Activated CD4-positive, alpha-beta T cell treated with anti-CD3 and anti-CD28 coated beads for 36 hours (primary cell): ENCODE measurements at regions of chr4 and their contacts with region 1.

Region 1: GRCh38 chr4:146342600-146343192 is 128.4 kb downstream of the REELD1 start:
- DNase-seq: peak; percentile 50
- ATAC-seq: no peak
- H3K4me3 Mint-ChIP-seq: no peak overlapping the region
- H3K27ac Mint-ChIP-seq: no peak overlapping the region
- H3K4me1 Mint-ChIP-seq: peaks cover 9% of the 10 kb centered on the region
- H3K27me3 Mint-ChIP-seq: no peaks in the 10 kb centered on the region

Region 2: DNA sequence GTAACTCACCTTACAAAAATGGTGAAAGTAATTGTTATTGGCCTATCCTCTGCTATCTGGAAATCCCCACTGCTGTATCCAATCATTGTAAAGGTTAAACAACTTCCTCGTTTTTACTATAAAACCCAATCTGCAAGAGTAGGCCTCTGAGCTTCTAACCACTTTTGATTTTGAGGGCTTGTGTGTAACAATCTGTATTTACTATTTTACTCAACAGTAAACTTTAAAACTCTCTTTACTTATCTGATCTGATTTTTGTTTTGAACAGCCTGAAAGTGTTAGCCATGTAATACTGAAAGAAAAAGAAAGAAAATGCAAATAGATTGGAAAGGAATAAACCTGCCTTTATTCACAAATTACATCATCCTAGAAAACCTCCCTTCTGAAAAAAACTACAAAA is 115.9 kb after region 1 on chr4:
- CTCF ChIA-PET with region 1: no interaction called
- POLR2A ChIA-PET with region 1: no interaction called
- intact Hi-C with region 1: loop called in 1 of 2 experiments (anchors 10 kb)
- DNase-seq: no peak
- ATAC-seq: peak; percentile 96
- H3K4me3 Mint-ChIP-seq: peak overlapping the region; percentile 62
- H3K27ac Mint-ChIP-seq: peak overlapping the region; percentile 93
- H3K4me1 Mint-ChIP-seq: peaks cover 24% of the 10 kb centered on the region
- H3K27me3 Mint-ChIP-seq: no peaks in the 10 kb centered on the region

Region 3: GRCh38 chr4:146522098-146522868 is 179.6 kb after region 1 on chr4:
- CTCF ChIA-PET with region 1: interaction called, 3 read pairs
- POLR2A ChIA-PET with region 1: no interaction called
- intact Hi-C with region 1: loop called (anchors 1 to 2 kb)
- DNase-seq: peak; percentile 91
- ATAC-seq: peak; percentile 77
- H3K4me3 Mint-ChIP-seq: no peak overlapping the region
- H3K27ac Mint-ChIP-seq: no peak overlapping the region
- H3K4me1 Mint-ChIP-seq: peaks cover 27% of the 10 kb centered on the region
- H3K27me3 Mint-ChIP-seq: no peaks in the 10 kb centered on the region

Region 4: GRCh38 chr4:146577111-146577510 is 234.4 kb after region 1 on chr4:
- CTCF ChIA-PET with region 1: no interaction called
- POLR2A ChIA-PET with region 1: no interaction called
- intact Hi-C with region 1: loop called in 1 of 2 experiments (anchors 5 kb)
- DNase-seq: no peak
- ATAC-seq: no peak
- H3K4me3 Mint-ChIP-seq: no peak overlapping the region
- H3K27ac Mint-ChIP-seq: no peak overlapping the region
- H3K4me1 Mint-ChIP-seq: no peaks in the 10 kb centered on the region
- H3K27me3 Mint-ChIP-seq: peaks cover 12% of the 10 kb centered on the region

Region 5: GRCh38 chr4:146638801-146639605 is 296.3 kb after region 1 on chr4 and contains the start of gene POU4F2:
- CTCF ChIA-PET with region 1: interaction called, 3 read pairs
- POLR2A ChIA-PET with region 1: no interaction called
- intact Hi-C with region 1: loop called (anchors 5 kb)
- DNase-seq: peak; percentile 53
- ATAC-seq: peak; percentile 59
- H3K4me3 Mint-ChIP-seq: peak within 1 kb of the TSS; percentile 26
- H3K27ac Mint-ChIP-seq: no peak within 1 kb of the TSS
- H3K4me1 Mint-ChIP-seq: peaks cover 22% of the 10 kb centered on the region
- H3K27me3 Mint-ChIP-seq: peaks cover 75% of the 10 kb centered on the region
- total RNA-seq, gene POU4F2: not detected

Region 6: GRCh38 chr4:146916479-146917076 is 573.9 kb after region 1 on chr4:
- CTCF ChIA-PET with region 1: interaction called, 7 read pairs
- POLR2A ChIA-PET with region 1: no interaction called
- intact Hi-C with region 1: loop called (anchors 1 to 2 kb)
- DNase-seq: peak; percentile 23
- ATAC-seq: no peak
- H3K4me3 Mint-ChIP-seq: no peak overlapping the region
- H3K27ac Mint-ChIP-seq: no peak overlapping the region
- H3K4me1 Mint-ChIP-seq: no peaks in the 10 kb centered on the region
- H3K27me3 Mint-ChIP-seq: peaks cover 8% of the 10 kb centered on the region

Region 7: DNA sequence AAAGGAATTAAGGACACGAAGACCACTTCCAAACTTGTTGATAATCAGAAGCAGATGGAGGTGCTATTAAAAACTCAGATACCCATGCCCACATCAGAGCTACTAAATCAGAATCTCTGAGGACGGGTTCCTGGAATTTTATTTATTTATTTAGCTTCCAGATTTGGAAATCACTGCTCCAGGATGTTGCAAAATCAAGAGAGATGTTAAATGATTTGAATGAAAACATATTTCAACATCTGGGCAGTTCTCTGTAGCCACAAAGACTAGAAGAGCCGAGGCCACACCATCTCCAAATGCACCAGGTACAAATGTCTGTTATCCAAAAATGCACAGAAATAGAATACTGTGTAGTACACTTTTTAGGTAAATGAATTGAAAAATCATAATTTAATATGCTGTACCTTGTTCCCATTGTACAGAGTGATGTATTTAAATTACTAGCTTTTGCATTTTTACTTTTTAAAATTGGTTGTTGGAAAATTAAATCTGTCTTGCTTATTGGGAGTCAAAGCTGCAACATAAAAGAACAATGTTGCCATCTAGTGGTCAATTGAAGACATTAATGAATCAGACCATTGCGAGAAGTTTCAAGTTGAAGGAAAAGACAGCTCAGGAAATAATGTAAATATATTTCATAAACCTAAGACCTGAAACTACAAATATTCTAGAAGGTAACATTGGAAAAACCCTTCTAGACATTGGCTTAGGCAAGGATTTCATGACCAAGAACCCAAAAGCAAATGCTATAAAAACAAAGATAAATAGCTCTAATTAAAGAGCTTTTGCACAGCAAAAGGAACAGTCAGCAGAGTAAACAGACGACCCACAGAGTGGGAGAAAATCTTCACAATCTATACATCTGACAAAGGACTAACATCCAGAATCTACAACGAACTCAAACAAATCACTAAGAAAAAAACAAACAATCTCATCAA is 754.2 kb after region 1 on chr4:
- CTCF ChIA-PET with region 1: interaction called, 26 read pairs
- POLR2A ChIA-PET with region 1: no interaction called
- intact Hi-C with region 1: loop called (anchors 1 kb)
- DNase-seq: no peak
- ATAC-seq: no peak
- H3K4me3 Mint-ChIP-seq: no peak overlapping the region
- H3K27ac Mint-ChIP-seq: no peak overlapping the region
- H3K4me1 Mint-ChIP-seq: no peaks in the 10 kb centered on the region
- H3K27me3 Mint-ChIP-seq: peaks cover 17% of the 10 kb centered on the region